Activated CD8-positive, alpha-beta T cell treated with anti-CD3 and anti-CD28 coated beads for 36 hours (primary cell): ENCODE measurements at regions of chr19 and their contacts with region 1.

Region 1: DNA sequence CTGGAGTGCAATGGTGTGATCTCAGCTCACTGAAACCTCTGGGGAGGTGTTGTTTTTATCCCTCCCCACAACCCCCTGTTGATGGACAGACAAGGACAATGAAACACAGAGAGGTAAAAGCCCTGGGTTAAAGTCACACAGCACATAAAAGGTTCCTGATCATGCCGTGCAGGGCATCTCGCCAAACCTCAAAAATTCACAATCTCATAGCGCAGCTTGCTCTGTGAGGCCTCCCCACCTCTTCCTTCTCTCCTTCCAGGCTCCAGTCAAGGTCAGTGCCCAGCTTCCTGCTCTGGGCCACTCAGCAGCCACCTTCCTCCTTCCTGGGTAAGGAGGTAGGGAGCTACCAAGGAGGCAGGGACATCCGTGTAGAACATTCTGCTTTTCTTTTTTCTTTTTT is 2.3 kb downstream of the FUT2 start:
- DNase-seq: no peak
- ATAC-seq: no peak
- H3K4me3 Mint-ChIP-seq: no peak overlapping the region
- H3K27ac Mint-ChIP-seq: no peak overlapping the region
- H3K4me1 Mint-ChIP-seq: peaks cover 11% of the 10 kb centered on the region
- H3K27me3 Mint-ChIP-seq: peaks cover 14% of the 10 kb centered on the region
- CTCF ChIP-seq: no peak

Region 2: DNA sequence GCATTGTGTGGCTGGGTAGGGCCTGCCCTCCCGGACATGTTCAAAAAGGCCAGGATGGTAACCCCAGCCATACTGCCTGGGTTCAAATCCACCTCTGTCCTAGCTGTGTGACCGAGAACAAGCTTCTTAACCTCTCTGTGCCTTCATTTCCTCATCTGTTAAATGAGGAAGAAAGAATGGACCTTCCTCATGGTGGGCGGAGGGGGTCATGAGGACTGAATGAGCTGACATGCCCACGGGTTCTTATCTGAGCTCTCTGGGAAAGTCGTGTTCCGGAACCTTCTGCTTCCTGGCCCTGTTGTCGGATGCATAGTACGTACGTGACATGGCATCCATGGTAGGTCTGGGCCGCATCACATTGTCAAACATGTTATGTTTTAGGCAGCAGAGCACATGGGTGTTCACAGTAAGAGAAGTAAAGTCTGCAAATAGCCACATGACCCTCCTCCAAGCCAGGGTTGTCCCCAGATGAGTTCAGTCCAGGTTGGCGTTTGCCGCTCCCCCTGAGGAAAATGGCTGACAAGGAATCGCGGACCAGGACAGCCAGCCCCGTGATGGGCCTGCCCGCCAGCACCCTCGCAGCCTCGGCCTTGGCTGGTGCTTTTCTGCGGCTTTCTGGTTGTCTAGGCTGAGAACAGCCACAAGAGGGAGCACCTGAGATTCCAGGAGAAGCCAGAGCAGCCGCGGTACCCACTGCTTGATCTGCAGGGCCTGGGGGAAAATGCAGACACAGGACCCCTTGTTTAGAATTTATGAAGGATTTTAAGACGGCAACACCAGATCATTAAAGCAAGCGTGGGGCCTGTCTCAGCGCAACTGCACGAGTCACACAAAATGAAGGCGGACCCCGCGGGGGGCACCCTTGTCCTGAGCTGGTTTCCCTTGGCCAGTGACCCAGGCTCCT is 22.9 kb before region 1 on chr19:
- CTCF ChIA-PET with region 1: interaction called, 15 read pairs
- POLR2A ChIA-PET with region 1: interaction called, 3 read pairs
- intact Hi-C with region 1: no loop called
- DNase-seq: peak; percentile 85
- ATAC-seq: peak; percentile 99
- H3K4me3 Mint-ChIP-seq: no peak overlapping the region
- H3K27ac Mint-ChIP-seq: no peak overlapping the region
- H3K4me1 Mint-ChIP-seq: peaks cover 3% of the 10 kb centered on the region
- H3K27me3 Mint-ChIP-seq: no peaks in the 10 kb centered on the region
- CTCF ChIP-seq: peak; percentile 75

Region 3: GRCh38 chr19:48738557-48739399 is 40.7 kb after region 1 on chr19:
- CTCF ChIA-PET with region 1: no interaction called
- POLR2A ChIA-PET with region 1: no interaction called
- intact Hi-C with region 1: no loop called
- DNase-seq: peak; percentile 96
- ATAC-seq: peak; percentile 93
- H3K4me3 Mint-ChIP-seq: peak overlapping the region; percentile 38
- H3K27ac Mint-ChIP-seq: peak overlapping the region; percentile 32
- H3K4me1 Mint-ChIP-seq: peaks cover 16% of the 10 kb centered on the region
- H3K27me3 Mint-ChIP-seq: peaks cover 6% of the 10 kb centered on the region
- CTCF ChIP-seq: no peak